ENCODE measurements at regions of chr3 and their contacts with region 1.

Region 1: GRCh38 chr3:151227807-151228665 is 25.0 kb upstream of the GPR171 start:
- DNase-seq: peak; percentile 90
- H3K4me3 Mint-ChIP-seq: no peak overlapping the region
- H3K27ac Mint-ChIP-seq: peak overlapping the region; percentile 62
- H3K4me1 Mint-ChIP-seq: peaks cover 62% of the 10 kb centered on the region
- H3K27me3 Mint-ChIP-seq: no peaks in the 10 kb centered on the region

Region 2: GRCh38 chr3:151086484-151087456 is 141.3 kb before region 1 on chr3:
- CTCF ChIA-PET with region 1: no interaction called
- intact Hi-C with region 1: loop called (anchors 10 kb)
- DNase-seq: peak; percentile 87
- H3K4me3 Mint-ChIP-seq: peak overlapping the region; percentile 82
- H3K27ac Mint-ChIP-seq: no peak overlapping the region
- H3K4me1 Mint-ChIP-seq: peaks cover 9% of the 10 kb centered on the region
- H3K27me3 Mint-ChIP-seq: peaks cover 46% of the 10 kb centered on the region

Region 3: DNA sequence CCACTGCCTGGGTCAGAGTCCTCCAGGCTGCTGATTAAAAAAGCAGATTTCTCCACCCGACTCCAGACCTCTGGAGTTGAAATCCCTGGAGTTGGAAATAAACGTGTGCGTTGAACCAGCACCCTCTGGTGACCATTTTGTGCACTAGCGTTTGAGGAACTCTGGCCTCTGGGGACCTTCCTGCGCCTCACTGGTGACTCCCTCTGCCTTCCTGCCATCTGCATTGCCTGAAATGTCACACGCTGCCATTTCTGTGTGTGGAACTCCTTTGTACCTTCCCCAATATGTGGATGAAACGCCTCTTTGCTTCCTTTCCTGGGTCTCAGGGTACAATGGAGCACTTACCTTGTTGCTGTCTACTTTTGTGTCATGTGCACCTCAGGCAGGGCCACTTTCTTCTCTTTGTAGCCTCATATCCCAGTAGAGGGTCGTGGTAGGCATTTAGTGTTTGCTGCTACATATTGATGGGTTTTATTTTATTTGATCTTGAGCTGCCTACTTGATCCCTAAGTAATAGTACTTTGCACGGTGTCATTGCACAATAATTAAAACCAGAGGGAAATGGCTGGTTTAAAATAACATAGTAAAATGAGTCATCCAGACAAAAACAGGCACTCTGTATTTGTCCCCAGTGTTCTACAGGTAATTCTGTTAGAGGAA is 81.8 kb before region 1 on chr3:
- CTCF ChIA-PET with region 1: no interaction called
- intact Hi-C with region 1: no loop called
- DNase-seq: peak; percentile 77
- H3K4me3 Mint-ChIP-seq: no peak overlapping the region
- H3K27ac Mint-ChIP-seq: no peak overlapping the region
- H3K4me1 Mint-ChIP-seq: no peaks in the 10 kb centered on the region
- H3K27me3 Mint-ChIP-seq: no peaks in the 10 kb centered on the region

Region 4: GRCh38 chr3:151183265-151183671 is 44.8 kb before region 1 on chr3:
- CTCF ChIA-PET with region 1: interaction called, 11 read pairs
- intact Hi-C with region 1: no loop called
- DNase-seq: no peak
- H3K4me3 Mint-ChIP-seq: peak overlapping the region; percentile 62
- H3K27ac Mint-ChIP-seq: peak overlapping the region; percentile 51
- H3K4me1 Mint-ChIP-seq: peaks cover 44% of the 10 kb centered on the region
- H3K27me3 Mint-ChIP-seq: no peaks in the 10 kb centered on the region

Region 5: GRCh38 chr3:151210676-151211381 is 17.2 kb before region 1 on chr3:
- CTCF ChIA-PET with region 1: interaction called, 96 read pairs
- intact Hi-C with region 1: loop called (anchors 1 kb)
- DNase-seq: peak; percentile 31
- H3K4me3 Mint-ChIP-seq: peak overlapping the region; percentile 48
- H3K27ac Mint-ChIP-seq: peak overlapping the region; percentile 90
- H3K4me1 Mint-ChIP-seq: peaks cover 56% of the 10 kb centered on the region
- H3K27me3 Mint-ChIP-seq: no peaks in the 10 kb centered on the region

Region 6: GRCh38 chr3:151248772-151249337 is 20.8 kb after region 1 on chr3:
- CTCF ChIA-PET with region 1: no interaction called
- intact Hi-C with region 1: no loop called
- DNase-seq: no peak
- H3K4me3 Mint-ChIP-seq: no peak overlapping the region
- H3K27ac Mint-ChIP-seq: no peak overlapping the region
- H3K4me1 Mint-ChIP-seq: no peaks in the 10 kb centered on the region
- H3K27me3 Mint-ChIP-seq: no peaks in the 10 kb centered on the region

Region 7: DNA sequence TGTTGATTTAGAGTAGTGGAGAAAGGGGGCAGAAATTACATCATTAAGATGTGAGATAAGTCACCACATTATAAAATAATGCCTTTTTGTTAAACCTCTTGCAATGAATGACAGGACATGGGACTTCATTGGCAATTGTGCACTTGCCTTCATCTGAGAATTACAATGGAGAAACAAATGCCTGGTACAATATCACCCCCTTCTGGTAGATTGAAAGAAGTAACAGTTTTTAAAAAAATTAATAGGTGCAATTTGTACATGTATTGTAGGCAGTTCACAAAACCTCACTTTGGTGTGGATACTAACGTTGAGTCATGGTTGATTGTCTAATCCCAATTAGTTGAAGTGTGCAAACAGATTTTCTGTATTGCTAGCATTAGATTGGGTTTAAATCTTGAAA is 54.9 kb after region 1 on chr3:
- CTCF ChIA-PET with region 1: interaction called, 248 read pairs
- intact Hi-C with region 1: loop called (anchors 1 kb)
- DNase-seq: no peak
- H3K4me3 Mint-ChIP-seq: no peak overlapping the region
- H3K27ac Mint-ChIP-seq: no peak overlapping the region
- H3K4me1 Mint-ChIP-seq: peaks cover 28% of the 10 kb centered on the region
- H3K27me3 Mint-ChIP-seq: no peaks in the 10 kb centered on the region

Region 8: DNA sequence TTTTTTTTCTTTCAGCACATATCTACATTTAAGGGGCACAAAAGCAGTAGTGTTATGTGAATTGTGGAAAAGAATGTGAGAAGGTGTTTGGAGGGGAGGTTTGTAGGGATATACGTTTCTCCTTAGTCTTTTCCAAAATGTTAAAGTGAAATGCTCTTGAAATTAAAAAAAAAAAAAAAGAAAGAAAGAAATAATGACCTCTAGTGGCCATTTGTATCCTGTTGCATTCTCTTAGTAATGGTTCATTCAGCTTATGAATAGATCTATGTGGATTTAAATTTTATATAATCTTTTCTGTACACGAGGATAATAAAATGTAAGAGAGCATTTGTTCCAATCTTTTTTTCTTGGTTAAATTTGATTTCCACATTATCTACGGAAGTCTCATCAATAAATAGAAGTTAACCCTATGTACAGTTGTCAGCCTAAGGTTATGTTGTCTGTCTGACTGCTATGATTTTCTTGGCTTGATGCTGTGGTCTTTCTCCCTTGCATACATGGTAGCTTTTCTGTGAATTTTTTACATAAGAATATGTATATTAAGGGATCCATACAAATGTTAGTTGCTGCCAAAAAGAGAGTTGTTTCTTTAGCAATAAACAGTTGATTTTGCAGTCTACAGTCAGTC is 99.6 kb after region 1 on chr3:
- CTCF ChIA-PET with region 1: interaction called, 20 read pairs
- intact Hi-C with region 1: loop called (anchors 1 kb)
- DNase-seq: no peak
- H3K4me3 Mint-ChIP-seq: no peak overlapping the region
- H3K27ac Mint-ChIP-seq: no peak overlapping the region
- H3K4me1 Mint-ChIP-seq: peaks cover 7% of the 10 kb centered on the region
- H3K27me3 Mint-ChIP-seq: peaks cover 4% of the 10 kb centered on the region

Region 9: GRCh38 chr3:151660885-151661284 is 432.8 kb after region 1 on chr3:
- CTCF ChIA-PET with region 1: no interaction called
- intact Hi-C with region 1: loop called (anchors 10 kb)
- DNase-seq: no peak
- H3K4me3 Mint-ChIP-seq: no peak overlapping the region
- H3K27ac Mint-ChIP-seq: no peak overlapping the region
- H3K4me1 Mint-ChIP-seq: no peaks in the 10 kb centered on the region
- H3K27me3 Mint-ChIP-seq: no peaks in the 10 kb centered on the region

Region 10: DNA sequence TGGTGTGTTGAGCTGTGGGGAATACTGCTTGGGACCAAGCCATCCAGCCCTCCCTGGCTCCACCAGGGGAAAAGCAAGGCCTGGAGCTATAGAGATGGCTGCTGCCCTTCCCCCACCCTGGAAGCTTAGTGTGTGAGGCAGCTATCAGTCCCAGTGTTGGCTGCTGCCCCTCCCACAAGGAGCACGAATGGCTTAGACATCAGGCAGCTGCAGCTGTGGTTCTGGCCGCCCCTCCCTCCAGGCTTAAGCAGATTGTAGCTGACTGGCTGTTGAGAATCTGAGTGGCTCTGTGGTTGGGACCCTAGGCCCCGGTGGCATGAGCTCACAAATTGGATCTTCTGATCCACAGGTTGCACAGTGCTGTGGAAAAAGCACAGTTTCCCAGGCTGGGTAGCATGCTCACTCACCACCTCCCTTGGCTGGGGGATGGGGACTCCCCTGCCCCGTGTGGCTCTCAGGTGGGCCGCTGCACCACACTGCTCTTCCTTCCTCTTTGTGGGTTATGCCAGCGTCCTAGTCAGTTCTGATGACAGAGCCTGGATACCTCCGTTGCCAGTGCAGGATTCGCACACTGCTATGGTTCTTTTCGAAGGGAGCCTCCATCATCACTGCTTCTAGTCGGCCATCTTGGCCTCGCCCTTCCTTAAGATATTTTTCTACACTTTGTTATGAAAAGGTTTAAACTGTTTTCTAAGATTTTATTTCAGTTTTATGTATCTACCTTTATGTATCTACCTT is 624.2 kb after region 1 on chr3:
- CTCF ChIA-PET with region 1: no interaction called
- intact Hi-C with region 1: no loop called
- DNase-seq: no peak
- H3K4me3 Mint-ChIP-seq: no peak overlapping the region
- H3K27ac Mint-ChIP-seq: no peak overlapping the region
- H3K4me1 Mint-ChIP-seq: no peaks in the 10 kb centered on the region
- H3K27me3 Mint-ChIP-seq: peaks cover 2% of the 10 kb centered on the region

Measured in activated naive CD4-positive, alpha-beta T cell treated with anti-CD3 and anti-CD28 coated beads for 36 hours (primary cell).